ENCODE measurements at regions of chr7 and their contacts with region 1.

Region 1: DNA sequence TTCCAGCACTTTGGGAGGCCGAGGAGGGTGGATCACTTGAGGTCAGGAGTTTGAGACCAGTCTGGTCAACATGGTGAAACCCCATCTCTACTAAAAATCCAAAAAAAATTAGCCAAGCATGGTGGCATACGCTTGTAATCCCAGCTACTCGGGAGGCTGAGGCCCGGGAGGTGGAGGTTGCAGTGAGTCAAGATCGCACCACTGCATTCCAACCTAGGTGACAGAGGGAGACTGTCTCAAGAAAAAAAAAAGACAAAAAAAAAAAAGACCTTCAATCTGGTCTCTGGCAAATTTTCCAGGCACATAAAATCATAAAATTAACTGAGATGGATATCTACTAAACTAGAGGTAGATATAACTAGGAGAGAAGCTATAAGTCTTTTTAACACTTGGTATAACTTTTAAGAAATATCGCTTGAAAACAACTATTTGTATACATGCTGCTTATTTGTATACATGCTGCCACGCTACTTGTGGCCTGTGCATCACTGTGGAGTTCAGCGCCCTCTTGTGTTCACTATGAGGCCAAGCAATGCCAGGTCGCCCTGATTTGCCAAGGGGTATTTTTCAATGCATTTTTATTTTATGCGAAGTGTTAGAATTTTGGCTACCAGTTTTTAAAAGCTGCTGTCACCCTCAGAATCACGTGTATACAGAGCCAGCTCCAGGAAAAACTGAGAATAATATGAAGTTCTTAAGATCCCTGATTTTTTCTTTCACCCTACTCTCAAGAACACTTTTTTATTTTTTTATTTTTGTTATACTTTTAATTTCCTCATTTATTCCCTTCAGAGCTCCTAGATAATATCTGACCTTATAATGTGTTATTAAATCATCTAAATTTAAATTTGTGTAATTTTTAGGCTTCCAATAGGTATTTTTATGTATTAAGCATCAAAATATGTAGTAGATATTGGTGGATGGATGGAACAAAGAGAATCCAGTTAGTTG is 26.7 kb downstream of the CYCS start:
- DNase-seq: peak; percentile 80
- H3K4me3 ChIP-seq: peak overlapping the region in 1 of 2 experiments; percentile 16; a peak in 1 of 4 replicates
- H3K27ac ChIP-seq: no peak overlapping the region
- H3K4me1 ChIP-seq: peaks cover 0 to 3% of the 10 kb centered on the region in 2 experiments; a peak in 1 of 4 replicates
- H3K27me3 ChIP-seq: no peaks in the 10 kb centered on the region
- CTCF ChIP-seq: peak; percentile 100
- EP300 ChIP-seq: no peak
- RAD21 ChIP-seq: peak; percentile 90

Region 2: DNA sequence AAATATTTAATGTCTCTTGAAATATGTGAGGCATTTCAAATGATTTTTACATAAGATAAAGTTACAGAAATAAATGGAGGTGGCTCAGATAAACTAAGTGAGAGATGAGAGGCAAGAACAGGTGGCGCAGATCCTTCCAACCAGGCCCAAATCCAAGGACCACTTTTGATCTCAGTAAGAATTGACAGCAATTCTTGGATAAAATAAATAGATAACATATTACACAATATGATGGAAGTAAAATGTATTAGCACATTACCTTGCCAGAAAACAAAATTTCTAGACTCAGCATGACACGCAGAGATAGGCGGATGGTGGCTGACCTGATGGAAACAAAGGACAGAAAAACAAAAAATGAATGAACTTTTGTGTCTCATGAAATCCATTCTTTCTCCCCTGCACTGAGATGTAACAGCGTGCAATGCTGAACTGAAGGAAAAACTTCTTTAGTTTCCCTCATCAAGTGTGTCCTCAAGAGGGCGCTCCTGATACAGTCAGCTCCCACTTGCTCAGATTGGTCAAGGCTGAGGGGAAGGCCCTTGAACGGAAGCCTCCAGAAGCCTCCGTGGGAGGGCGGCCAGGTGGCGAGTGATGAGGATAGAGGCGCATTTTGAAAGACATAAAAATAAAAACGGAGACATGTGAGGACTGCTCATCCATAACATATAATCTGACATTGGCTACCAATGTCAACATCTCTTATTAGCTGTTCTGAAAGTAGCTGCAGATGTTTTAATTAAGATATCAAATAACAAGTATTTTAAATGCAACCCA is 278.3 kb before region 1 on chr7:
- CTCF ChIA-PET with region 1: interaction called, 396 read pairs
- POLR2A ChIA-PET with region 1: no interaction called
- DNase-seq: peak; percentile 77
- H3K4me3 ChIP-seq: no peak overlapping the region
- H3K27ac ChIP-seq: peak overlapping the region; percentile 70 to 93; a peak in 3 of 4 replicates
- H3K4me1 ChIP-seq: peaks cover 5 to 18% of the 10 kb centered on the region in 2 experiments; a peak in 3 of 4 replicates
- H3K27me3 ChIP-seq: no peaks in the 10 kb centered on the region
- CTCF ChIP-seq: peak; percentile 99
- EP300 ChIP-seq: peak in 1 of 2 experiments; percentile 19; a peak in 1 of 4 replicates
- RAD21 ChIP-seq: peak; percentile 98

Region 3: GRCh38 chr7:24874806-24875205 is 223.6 kb before region 1 on chr7:
- CTCF ChIA-PET with region 1: no interaction called
- POLR2A ChIA-PET with region 1: no interaction called
- DNase-seq: no peak
- H3K4me3 ChIP-seq: no peak overlapping the region
- H3K27ac ChIP-seq: no peak overlapping the region
- H3K4me1 ChIP-seq: peaks cover 0 to 3% of the 10 kb centered on the region in 2 experiments; a peak in 2 of 4 replicates
- H3K27me3 ChIP-seq: no peaks in the 10 kb centered on the region
- CTCF ChIP-seq: no peak
- EP300 ChIP-seq: no peak
- RAD21 ChIP-seq: no peak

Region 4: GRCh38 chr7:24979863-24980533 is 118.4 kb before region 1 on chr7 and contains the start of gene OSBPL3:
- CTCF ChIA-PET with region 1: interaction called, 19 read pairs
- POLR2A ChIA-PET with region 1: no interaction called
- DNase-seq: peak; percentile 100
- H3K4me3 ChIP-seq: peak within 1 kb of the TSS; percentile 73 to 97
- H3K27ac ChIP-seq: peak within 1 kb of the TSS; percentile 84 to 87
- H3K4me1 ChIP-seq: peaks cover 21 to 28% of the 10 kb centered on the region in 2 experiments; a peak in 3 of 4 replicates
- H3K27me3 ChIP-seq: no peaks in the 10 kb centered on the region
- CTCF ChIP-seq: no peak
- EP300 ChIP-seq: peak in 1 of 2 experiments; percentile 2; a peak in 1 of 4 replicates
- RAD21 ChIP-seq: peak; percentile 38
- polyA plus RNA-seq, gene OSBPL3: 22.6 and 23.2 TPM in 2 replicates

Region 5: DNA sequence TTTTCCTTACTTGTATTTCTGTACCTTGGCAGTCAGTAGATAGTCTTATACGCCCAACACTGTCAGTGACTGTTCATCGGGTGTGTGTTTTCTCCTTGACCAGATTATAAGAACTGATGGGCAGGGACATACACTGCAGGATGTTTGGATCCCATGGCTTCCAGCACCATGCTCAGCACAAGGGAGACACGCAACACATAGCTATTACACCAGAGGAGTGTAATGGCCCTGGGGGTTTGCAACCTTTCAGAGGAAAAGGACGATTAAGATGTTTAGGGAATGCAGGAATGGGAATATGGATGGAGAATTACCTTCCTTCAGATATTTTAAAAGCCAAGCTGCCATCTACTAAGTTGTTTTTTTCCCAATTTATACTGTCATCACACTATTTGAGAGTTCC is 91.2 kb before region 1 on chr7:
- CTCF ChIA-PET with region 1: no interaction called
- POLR2A ChIA-PET with region 1: no interaction called
- DNase-seq: no peak
- H3K4me3 ChIP-seq: no peak overlapping the region
- H3K27ac ChIP-seq: no peak overlapping the region
- H3K4me1 ChIP-seq: peaks cover 0 to 3% of the 10 kb centered on the region in 2 experiments; a peak in 1 of 4 replicates
- H3K27me3 ChIP-seq: no peaks in the 10 kb centered on the region
- CTCF ChIP-seq: no peak
- EP300 ChIP-seq: no peak
- RAD21 ChIP-seq: no peak

Region 6: DNA sequence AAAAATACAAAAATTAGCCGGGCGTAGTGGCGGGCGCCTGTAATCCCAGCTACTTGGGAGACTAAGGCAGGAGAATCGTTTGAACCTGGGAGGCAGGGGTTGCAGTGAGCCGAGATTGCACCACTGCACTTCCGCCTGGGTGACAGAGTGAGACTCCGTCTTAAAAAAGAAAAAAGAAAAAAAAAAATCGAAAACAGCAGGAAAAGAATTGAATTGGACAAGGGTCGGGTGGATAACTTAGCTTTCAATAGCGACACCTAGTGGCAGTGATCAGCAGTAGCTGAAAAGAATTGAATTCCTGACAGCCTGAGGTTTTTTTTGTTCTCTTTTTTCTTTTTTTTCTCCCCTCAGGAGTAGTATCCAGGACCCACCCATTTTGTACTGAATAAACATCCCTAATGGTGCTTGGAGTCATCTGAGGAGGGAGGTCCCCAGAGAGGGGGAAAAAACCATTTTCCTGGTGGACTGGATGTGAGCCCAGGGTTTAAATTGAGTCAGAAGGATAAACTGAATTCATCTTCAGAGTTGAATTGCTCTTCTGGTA is 28.4 kb before region 1 on chr7:
- CTCF ChIA-PET with region 1: interaction called, 115 read pairs
- POLR2A ChIA-PET with region 1: no interaction called
- DNase-seq: peak; percentile 83
- H3K4me3 ChIP-seq: peak overlapping the region in 1 of 2 experiments; percentile 30; a peak in 1 of 4 replicates
- H3K27ac ChIP-seq: no peak overlapping the region
- H3K4me1 ChIP-seq: no peaks in the 10 kb centered on the region
- H3K27me3 ChIP-seq: no peaks in the 10 kb centered on the region
- CTCF ChIP-seq: peak; percentile 99
- EP300 ChIP-seq: no peak
- RAD21 ChIP-seq: peak; percentile 93

Region 7: GRCh38 chr7:25109276-25109675 is 10.9 kb after region 1 on chr7:
- CTCF ChIA-PET with region 1: interaction called, 41 read pairs
- POLR2A ChIA-PET with region 1: no interaction called
- DNase-seq: no peak
- H3K4me3 ChIP-seq: no peak overlapping the region
- H3K27ac ChIP-seq: no peak overlapping the region
- H3K4me1 ChIP-seq: no peaks in the 10 kb centered on the region
- H3K27me3 ChIP-seq: no peaks in the 10 kb centered on the region
- CTCF ChIP-seq: no peak
- EP300 ChIP-seq: no peak
- RAD21 ChIP-seq: no peak

Region 8: GRCh38 chr7:25132430-25132829 is 34.1 kb after region 1 on chr7:
- CTCF ChIA-PET with region 1: interaction called, 29 read pairs
- POLR2A ChIA-PET with region 1: no interaction called
- DNase-seq: no peak
- H3K4me3 ChIP-seq: no peak overlapping the region
- H3K27ac ChIP-seq: no peak overlapping the region
- H3K4me1 ChIP-seq: no peaks in the 10 kb centered on the region
- H3K27me3 ChIP-seq: no peaks in the 10 kb centered on the region
- CTCF ChIP-seq: no peak
- EP300 ChIP-seq: no peak
- RAD21 ChIP-seq: no peak

Measured in SK-N-SH (cell line).